ENCODE measurements at regions of chr3 and their contacts with region 1.

Region 1: DNA sequence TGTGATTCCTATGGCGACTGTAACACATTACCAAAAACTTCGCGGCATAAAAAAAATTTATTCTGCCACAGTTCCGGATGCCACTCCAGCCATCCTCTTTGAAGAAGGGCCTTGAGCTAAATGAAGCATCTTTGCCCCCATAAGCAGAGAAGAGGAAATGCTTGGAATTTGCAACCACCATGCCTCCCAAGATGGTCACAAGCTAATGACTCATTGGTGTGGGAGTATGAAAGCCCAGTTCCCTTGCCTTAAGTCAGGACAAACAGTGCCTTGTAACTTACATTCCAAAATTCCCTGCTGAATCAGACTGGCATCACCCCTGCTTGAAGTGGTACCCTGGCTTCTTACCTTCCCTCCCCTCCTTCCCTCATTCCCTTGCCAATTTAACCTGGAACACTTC is 1077.4 kb downstream of the EPHA3 start:
- DNase-seq: no peak
- H3K4me3 Mint-ChIP-seq: no peak overlapping the region
- H3K27ac Mint-ChIP-seq: no peak overlapping the region
- H3K4me1 Mint-ChIP-seq: no peaks in the 10 kb centered on the region
- H3K27me3 Mint-ChIP-seq: no peaks in the 10 kb centered on the region
- CTCF ChIP-seq: no peak

Region 2: GRCh38 chr3:88203642-88204055 is 1981.2 kb before region 1 on chr3:
- CTCF ChIA-PET with region 1: no interaction called
- intact Hi-C with region 1: loop called (anchors 5 kb)
- DNase-seq: peak; percentile 79
- H3K4me3 Mint-ChIP-seq: no peak overlapping the region
- H3K27ac Mint-ChIP-seq: no peak overlapping the region
- H3K4me1 Mint-ChIP-seq: peaks cover 19% of the 10 kb centered on the region
- H3K27me3 Mint-ChIP-seq: no peaks in the 10 kb centered on the region
- CTCF ChIP-seq: peak; percentile 63

Region 3: DNA sequence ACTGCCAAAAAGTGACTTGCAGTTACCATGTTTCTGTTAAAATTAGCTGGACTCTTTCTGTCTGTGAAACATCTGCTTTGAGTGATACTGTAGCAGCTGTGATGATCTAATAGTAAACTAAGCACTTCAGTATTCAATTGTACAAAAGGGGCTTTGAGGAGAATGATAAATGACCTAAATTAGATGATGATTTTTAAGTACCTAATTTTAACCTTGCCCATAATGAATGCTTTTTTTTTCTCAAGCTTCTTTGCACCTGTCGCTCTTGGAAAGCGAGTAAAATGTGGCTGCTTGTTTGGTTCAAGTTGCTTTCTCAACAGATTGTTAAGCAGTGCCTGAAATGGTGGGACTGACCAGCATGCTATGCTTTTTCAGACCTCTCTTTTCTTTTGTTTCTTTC is 325.1 kb before region 1 on chr3:
- CTCF ChIA-PET with region 1: no interaction called
- intact Hi-C with region 1: loop called (anchors 5 kb)
- DNase-seq: no peak
- H3K4me3 Mint-ChIP-seq: no peak overlapping the region
- H3K27ac Mint-ChIP-seq: no peak overlapping the region
- H3K4me1 Mint-ChIP-seq: no peaks in the 10 kb centered on the region
- H3K27me3 Mint-ChIP-seq: no peaks in the 10 kb centered on the region
- CTCF ChIP-seq: no peak

Region 4: GRCh38 chr3:90136468-90137191 is 48.2 kb before region 1 on chr3:
- CTCF ChIA-PET with region 1: no interaction called
- intact Hi-C with region 1: loop called (anchors 5 kb)
- DNase-seq: peak; percentile 59
- H3K4me3 Mint-ChIP-seq: peak overlapping the region; percentile 25
- H3K27ac Mint-ChIP-seq: peak overlapping the region; percentile 71
- H3K4me1 Mint-ChIP-seq: peaks cover 36% of the 10 kb centered on the region
- H3K27me3 Mint-ChIP-seq: no peaks in the 10 kb centered on the region
- CTCF ChIP-seq: no peak

Measured in Calu3 (cell line).